ENCODE measurements at regions of chr10 and their contacts with region 1.

Region 1: GRCh38 chr10:93288654-93289634 is 193.2 kb downstream of the MYOF start:
- DNase-seq: peak; percentile 66 to 72 (median 70)
- ATAC-seq: peak; percentile 79
- H3K4me3 ChIP-seq: no peak overlapping the region
- H3K27ac ChIP-seq: no peak overlapping the region
- H3K4me1 ChIP-seq: no peaks in the 10 kb centered on the region; a peak in 1 of 5 replicates
- H3K27me3 ChIP-seq: peaks cover 2 to 14% of the 10 kb centered on the region in 2 experiments; a peak in 3 of 5 replicates
- CTCF ChIP-seq: peak; percentile 61 to 84 (median 72)
- EP300 ChIP-seq: no peak
- POLR2A ChIP-seq: no peak
- RAD21 ChIP-seq: peak; percentile 71 to 85

Region 2: GRCh38 chr10:92965314-92965713 is 323.6 kb before region 1 on chr10:
- CTCF ChIA-PET with region 1: interaction called, 3 read pairs
- POLR2A ChIA-PET with region 1: no interaction called
- in situ Hi-C with region 1: no loop called
- intact Hi-C with region 1: loop called (anchors 5 kb)
- DNase-seq: peak; percentile 5 to 51 (median 9)
- ATAC-seq: no peak
- H3K4me3 ChIP-seq: no peak overlapping the region
- H3K27ac ChIP-seq: no peak overlapping the region
- H3K4me1 ChIP-seq: no peaks in the 10 kb centered on the region; a peak in 1 of 5 replicates
- H3K27me3 ChIP-seq: no peaks in the 10 kb centered on the region
- CTCF ChIP-seq: peak; percentile 27 to 65 (median 32); a peak in 3 of 6 replicates
- EP300 ChIP-seq: no peak
- POLR2A ChIP-seq: no peak
- RAD21 ChIP-seq: peak; percentile 21 to 66; a peak in 3 of 4 replicates

Region 3: GRCh38 chr10:93080350-93081046 is 208.4 kb before region 1 on chr10:
- CTCF ChIA-PET with region 1: interaction called, 3 read pairs
- POLR2A ChIA-PET with region 1: no interaction called
- in situ Hi-C with region 1: no loop called
- intact Hi-C with region 1: loop called (anchors 1 kb)
- DNase-seq: peak; percentile 67 to 76 (median 73)
- ATAC-seq: peak; percentile 85
- H3K4me3 ChIP-seq: no peak overlapping the region
- H3K27ac ChIP-seq: no peak overlapping the region
- H3K4me1 ChIP-seq: peaks cover 0 to 12% of the 10 kb centered on the region in 2 experiments; a peak in 3 of 5 replicates
- H3K27me3 ChIP-seq: peaks cover 2 to 11% of the 10 kb centered on the region in 2 experiments; a peak in 3 of 5 replicates
- CTCF ChIP-seq: peak; percentile 72 to 86 (median 77)
- EP300 ChIP-seq: no peak
- POLR2A ChIP-seq: no peak
- RAD21 ChIP-seq: peak; percentile 63 to 82

Region 4: DNA sequence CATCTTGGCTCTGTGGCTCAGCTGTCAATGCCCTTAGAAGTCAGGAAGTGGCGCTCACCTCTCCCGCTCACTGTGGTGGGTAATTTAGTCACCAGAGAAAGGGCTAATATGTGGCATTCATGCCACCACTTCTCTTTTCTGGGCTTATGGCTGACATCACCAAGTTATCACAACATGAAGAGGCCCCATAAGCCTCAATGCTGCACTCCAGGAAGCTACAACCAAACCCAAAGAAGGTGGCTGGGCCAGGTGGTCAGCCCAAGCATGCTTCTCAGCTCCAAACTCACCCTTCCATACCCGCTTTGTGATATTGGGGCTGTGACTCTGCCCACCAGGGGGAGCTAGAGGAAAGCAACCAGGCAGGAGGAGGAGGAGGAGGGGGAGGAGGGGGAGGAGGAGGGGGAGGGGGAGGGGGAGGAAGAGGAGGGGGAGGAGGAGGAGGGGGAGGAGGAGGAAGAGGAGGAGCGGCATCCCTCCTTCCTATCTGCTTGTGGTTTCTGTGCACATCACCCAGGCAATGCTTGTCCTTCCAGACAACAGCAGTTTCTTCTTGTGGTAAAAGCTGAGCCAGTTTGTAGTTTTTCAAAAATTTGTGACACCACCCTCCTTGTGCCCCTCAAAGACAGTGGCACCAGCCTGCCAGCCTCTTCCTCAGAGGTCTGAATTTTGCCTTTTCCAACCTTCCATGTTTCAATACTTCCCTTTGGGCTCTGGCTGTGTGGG is 173.1 kb before region 1 on chr10:
- CTCF ChIA-PET with region 1: interaction called, 8 read pairs
- POLR2A ChIA-PET with region 1: no interaction called
- in situ Hi-C with region 1: no loop called
- intact Hi-C with region 1: loop called (anchors 10 kb)
- DNase-seq: peak; percentile 72 to 76 (median 74)
- ATAC-seq: peak; percentile 83
- H3K4me3 ChIP-seq: no peak overlapping the region
- H3K27ac ChIP-seq: no peak overlapping the region
- H3K4me1 ChIP-seq: no peaks in the 10 kb centered on the region
- H3K27me3 ChIP-seq: peaks cover 0 to 14% of the 10 kb centered on the region in 2 experiments; a peak in 4 of 5 replicates
- CTCF ChIP-seq: peak; percentile 42 to 69 (median 60); a peak in 5 of 6 replicates
- EP300 ChIP-seq: no peak
- POLR2A ChIP-seq: no peak
- RAD21 ChIP-seq: peak in 1 of 2 experiments; percentile 55; a peak in 2 of 4 replicates

Region 5: GRCh38 chr10:93224005-93224779 is 64.8 kb before region 1 on chr10:
- CTCF ChIA-PET with region 1: no interaction called
- POLR2A ChIA-PET with region 1: no interaction called
- in situ Hi-C with region 1: no loop called
- intact Hi-C with region 1: loop called (anchors 1 kb)
- DNase-seq: no peak
- ATAC-seq: no peak
- H3K4me3 ChIP-seq: no peak overlapping the region
- H3K27ac ChIP-seq: no peak overlapping the region
- H3K4me1 ChIP-seq: peaks cover 3 to 6% of the 10 kb centered on the region in 2 experiments; a peak in 2 of 5 replicates
- H3K27me3 ChIP-seq: no peaks in the 10 kb centered on the region; a peak in 1 of 5 replicates
- CTCF ChIP-seq: peak in 1 of 3 experiments; percentile 24; a peak in 2 of 6 replicates
- EP300 ChIP-seq: no peak
- POLR2A ChIP-seq: no peak
- RAD21 ChIP-seq: no peak; a peak in 1 of 4 replicates

Region 6: GRCh38 chr10:93573051-93573909 is 284.3 kb after region 1 on chr10:
- CTCF ChIA-PET with region 1: no interaction called
- POLR2A ChIA-PET with region 1: no interaction called
- in situ Hi-C with region 1: no loop called
- intact Hi-C with region 1: no loop called
- DNase-seq: no peak
- ATAC-seq: no peak
- H3K4me3 ChIP-seq: no peak overlapping the region
- H3K27ac ChIP-seq: no peak overlapping the region
- H3K4me1 ChIP-seq: no peaks in the 10 kb centered on the region
- H3K27me3 ChIP-seq: peaks cover 6 to 34% of the 10 kb centered on the region in 2 experiments; a peak in 3 of 5 replicates
- CTCF ChIP-seq: no peak
- EP300 ChIP-seq: no peak
- POLR2A ChIP-seq: no peak
- RAD21 ChIP-seq: no peak

Region 7: DNA sequence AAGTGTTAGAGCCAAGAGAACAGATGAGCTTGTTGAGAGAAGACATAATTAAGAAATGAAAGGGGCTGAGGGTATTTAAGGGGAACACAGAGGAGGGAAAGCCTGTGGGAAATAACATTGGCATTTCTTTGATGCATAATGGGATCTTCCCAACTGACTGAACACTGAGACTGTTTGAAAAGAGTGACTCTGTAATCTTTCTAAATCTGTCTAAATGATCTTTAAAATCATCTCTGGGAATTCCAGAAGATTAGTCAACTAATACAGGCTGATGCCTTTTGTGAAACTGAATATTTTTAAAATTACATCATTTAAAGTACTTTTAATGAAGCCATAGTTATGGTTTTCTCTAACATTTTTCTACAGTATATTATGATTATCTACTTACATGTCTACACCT is 587.4 kb after region 1 on chr10:
- CTCF ChIA-PET with region 1: no interaction called
- POLR2A ChIA-PET with region 1: no interaction called
- in situ Hi-C with region 1: no loop called
- intact Hi-C with region 1: no loop called
- DNase-seq: no peak
- ATAC-seq: no peak
- H3K4me3 ChIP-seq: no peak overlapping the region
- H3K27ac ChIP-seq: no peak overlapping the region
- H3K4me1 ChIP-seq: peaks cover 0 to 9% of the 10 kb centered on the region in 2 experiments; a peak in 2 of 5 replicates
- H3K27me3 ChIP-seq: no peaks in the 10 kb centered on the region
- CTCF ChIP-seq: no peak
- EP300 ChIP-seq: no peak
- POLR2A ChIP-seq: no peak
- RAD21 ChIP-seq: no peak

Measured in K562 (cell line).